Breast epithelium (tissue), 4 donors: ENCODE measurements at regions of chr2 and their contacts with region 1.

Region 1: DNA sequence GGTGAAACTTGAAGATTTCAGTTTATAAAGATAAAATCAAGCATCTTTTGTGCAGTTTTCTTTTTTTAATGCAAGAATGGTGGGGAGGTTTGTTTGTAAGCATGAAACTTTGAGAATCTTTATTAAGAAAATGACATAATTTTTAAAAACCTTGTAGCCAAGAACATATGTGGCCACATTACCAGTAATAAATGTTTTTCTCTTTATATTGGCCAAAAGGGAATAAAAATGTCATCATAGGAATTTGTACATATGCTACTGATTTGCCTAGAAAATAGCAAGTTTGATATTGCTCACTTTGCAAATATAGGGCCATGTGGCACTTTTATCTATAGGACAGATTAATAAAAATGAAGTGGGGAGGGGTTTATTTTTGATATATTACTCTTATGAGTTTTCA is 25.6 kb downstream of the METTL21A start:
- DNase-seq: no peak
- H3K4me3 ChIP-seq: no peak overlapping the region
- H3K27ac ChIP-seq: no peak overlapping the region
- H3K4me1 ChIP-seq: no peaks in the 10 kb centered on the region
- H3K27me3 ChIP-seq: no peaks in the 10 kb centered on the region
- CTCF ChIP-seq: no peak
- POLR2A ChIP-seq: no peak

Region 2: GRCh38 chr2:206968134-206969086 is 631.2 kb before region 1 on chr2:
- intact Hi-C with region 1: loop called (anchors 5 kb)
- DNase-seq: no peak
- H3K4me3 ChIP-seq: no peak overlapping the region
- H3K27ac ChIP-seq: no peak overlapping the region
- H3K4me1 ChIP-seq: no peaks in the 10 kb centered on the region
- H3K27me3 ChIP-seq: no peaks in the 10 kb centered on the region
- CTCF ChIP-seq: no peak
- POLR2A ChIP-seq: no peak

Region 3: DNA sequence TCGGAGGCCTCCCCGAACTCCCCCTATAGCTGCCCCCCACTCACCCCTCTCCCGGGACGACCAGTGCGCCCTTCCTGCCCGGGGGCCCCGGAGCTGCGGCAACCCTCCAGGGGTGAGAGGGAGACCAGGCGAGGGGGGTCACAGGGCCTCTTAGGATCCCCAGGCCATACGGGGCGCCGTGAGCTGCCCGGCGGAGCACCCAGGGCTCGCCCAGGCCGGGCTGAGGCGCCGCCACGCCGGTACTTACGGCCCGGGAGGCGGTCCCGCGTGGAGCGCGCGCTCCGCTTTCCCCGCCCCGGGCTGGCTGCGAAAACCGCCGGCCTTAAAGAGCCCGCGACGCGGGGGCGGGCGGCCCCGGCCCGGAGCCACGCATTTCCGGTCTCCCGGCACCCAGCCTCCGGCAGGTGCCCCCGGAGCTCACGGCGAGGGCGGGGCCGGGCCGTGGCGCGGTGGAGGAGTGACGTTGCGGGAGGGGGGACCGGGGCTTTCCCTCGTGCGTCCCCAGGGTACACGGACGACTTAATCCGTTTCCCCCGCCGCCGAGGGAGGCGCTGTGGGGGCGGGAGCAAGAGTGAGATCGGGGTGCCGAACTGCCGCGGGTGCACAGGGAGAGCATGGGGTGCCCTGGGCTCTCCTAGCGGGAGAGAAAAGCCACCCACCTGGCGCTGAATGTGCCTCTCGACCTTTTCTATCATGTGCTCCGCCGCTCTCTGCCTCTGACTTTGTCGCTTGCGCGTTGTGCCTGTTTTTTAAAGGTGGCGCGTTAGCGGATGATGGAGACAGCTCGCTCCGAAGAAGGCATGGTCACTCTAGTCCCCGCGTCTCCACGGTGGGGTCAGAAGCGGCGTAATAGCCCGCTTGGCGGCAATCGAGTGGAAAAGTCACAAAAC is 25.6 kb after region 1 on chr2 and contains the start of gene METTL21A:
- intact Hi-C with region 1: no loop called
- DNase-seq: peak; percentile 53 to 60
- H3K4me3 ChIP-seq: peak within 1 kb of the TSS; percentile 78 to 98 (median 88)
- H3K27ac ChIP-seq: peak within 1 kb of the TSS; percentile 87
- H3K4me1 ChIP-seq: peaks cover 0 to 4% of the 10 kb centered on the region in 2 donors
- H3K27me3 ChIP-seq: no peaks in the 10 kb centered on the region
- CTCF ChIP-seq: peak in 2 of 3 donors; percentile 28 to 33
- POLR2A ChIP-seq: no peak
- total RNA-seq, gene METTL21A: 12.4 to 17.0 (median 13.3) TPM